Caco-2 (cell line): ENCODE measurements at regions of chr1 and their contacts with region 1.

Region 1: DNA sequence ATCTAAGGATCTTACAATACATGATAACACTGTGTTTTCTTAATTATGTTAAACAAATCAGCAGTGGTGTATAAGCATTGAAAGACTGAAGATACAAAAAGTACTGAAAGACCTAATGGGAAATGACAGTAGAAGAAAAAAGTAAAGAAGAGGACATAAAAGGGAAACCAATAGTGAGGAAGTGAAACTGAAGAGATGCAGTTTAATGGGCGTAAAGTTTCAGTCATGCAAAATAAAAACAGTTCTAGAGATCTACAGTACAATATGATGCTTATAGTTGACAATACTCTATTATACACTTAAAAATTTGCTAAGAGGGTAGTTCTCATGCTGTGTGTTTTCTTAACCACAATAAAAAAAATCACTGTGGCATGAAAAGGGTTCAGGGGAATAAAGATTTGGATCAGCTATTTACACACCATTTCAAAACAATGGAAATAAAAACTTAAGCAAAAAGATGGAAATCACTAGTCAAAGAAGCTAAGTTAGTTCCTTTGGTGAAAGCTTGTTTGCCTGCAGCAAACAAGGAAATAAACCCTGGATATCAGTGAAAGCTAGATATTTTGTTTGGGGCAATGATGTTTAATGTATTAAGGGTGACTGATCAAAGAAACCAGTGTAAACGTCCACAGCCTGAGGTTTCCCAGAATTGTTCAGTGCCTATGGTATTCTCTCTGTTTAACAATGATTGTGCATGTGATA is 1160.8 kb upstream of the ADGRL2 start:
- DNase-seq: no peak
- H3K4me3 ChIP-seq: no peak overlapping the region
- H3K4me3 Mint-ChIP-seq: no peak overlapping the region
- H3K27ac Mint-ChIP-seq: no peak overlapping the region
- H3K4me1 ChIP-seq: no peaks in the 10 kb centered on the region
- H3K4me1 Mint-ChIP-seq: peaks cover 7% of the 10 kb centered on the region
- H3K27me3 ChIP-seq: no peaks in the 10 kb centered on the region
- H3K27me3 Mint-ChIP-seq: no peaks in the 10 kb centered on the region
- CTCF ChIP-seq: no peak

Region 2: GRCh38 chr1:80565416-80565815 is 74.5 kb before region 1 on chr1:
- CTCF ChIA-PET with region 1: no interaction called
- POLR2A ChIA-PET with region 1: no interaction called
- intact Hi-C with region 1: loop called (anchors 10 kb)
- DNase-seq: no peak
- H3K4me3 ChIP-seq: no peak overlapping the region
- H3K4me3 Mint-ChIP-seq: no peak overlapping the region
- H3K27ac Mint-ChIP-seq: no peak overlapping the region
- H3K4me1 ChIP-seq: no peaks in the 10 kb centered on the region
- H3K4me1 Mint-ChIP-seq: no peaks in the 10 kb centered on the region
- H3K27me3 ChIP-seq: no peaks in the 10 kb centered on the region
- H3K27me3 Mint-ChIP-seq: peaks cover 1% of the 10 kb centered on the region
- CTCF ChIP-seq: no peak